Activated T-helper 1 cell treated with anti-CD3 and anti-CD28 coated beads, Interleukin-12 subunit alpha, Interleukin-12 subunit beta, Interleukin-2, Interleukin-4 antibody, amounts not matched to agents 30 ng/mL and 10 ng/mL and 1 ng/mL, durations not matched to agents 14 hours and 24 hours and 36 hours (primary cell): ENCODE measurements at regions of chr5 and their contacts with region 1.

Region 1: GRCh38 chr5:60677844-60678664 is 21.9 kb downstream of the DEPDC1B start:
- DNase-seq: no peak
- H3K4me3 Mint-ChIP-seq: no peak overlapping the region
- H3K27ac Mint-ChIP-seq: no peak overlapping the region
- H3K4me1 Mint-ChIP-seq: peaks cover 12% of the 10 kb centered on the region
- H3K27me3 Mint-ChIP-seq: no peaks in the 10 kb centered on the region

Region 2: GRCh38 chr5:60699530-60700382 is 21.7 kb after region 1 on chr5 and contains the start of gene DEPDC1B:
- intact Hi-C with region 1: loop called (anchors 1 kb)
- DNase-seq: peak; percentile 87
- H3K4me3 Mint-ChIP-seq: peak within 1 kb of the TSS; percentile 96
- H3K27ac Mint-ChIP-seq: peak within 1 kb of the TSS; percentile 93
- H3K4me1 Mint-ChIP-seq: peaks cover 37% of the 10 kb centered on the region
- H3K27me3 Mint-ChIP-seq: peaks cover 18% of the 10 kb centered on the region
- total RNA-seq, gene DEPDC1B: 19.6 and 21.2 TPM in 2 replicates

Region 3: GRCh38 chr5:60856066-60856465 is 178.0 kb after region 1 on chr5:
- intact Hi-C with region 1: no loop called
- DNase-seq: no peak
- H3K4me3 Mint-ChIP-seq: no peak overlapping the region
- H3K27ac Mint-ChIP-seq: no peak overlapping the region
- H3K4me1 Mint-ChIP-seq: no peaks in the 10 kb centered on the region
- H3K27me3 Mint-ChIP-seq: peaks cover 2% of the 10 kb centered on the region

Region 4: GRCh38 chr5:60883229-60883628 is 205.2 kb after region 1 on chr5:
- intact Hi-C with region 1: loop called (anchors 1 kb)
- DNase-seq: no peak
- H3K4me3 Mint-ChIP-seq: no peak overlapping the region
- H3K27ac Mint-ChIP-seq: no peak overlapping the region
- H3K4me1 Mint-ChIP-seq: no peaks in the 10 kb centered on the region
- H3K27me3 Mint-ChIP-seq: no peaks in the 10 kb centered on the region

Region 5: DNA sequence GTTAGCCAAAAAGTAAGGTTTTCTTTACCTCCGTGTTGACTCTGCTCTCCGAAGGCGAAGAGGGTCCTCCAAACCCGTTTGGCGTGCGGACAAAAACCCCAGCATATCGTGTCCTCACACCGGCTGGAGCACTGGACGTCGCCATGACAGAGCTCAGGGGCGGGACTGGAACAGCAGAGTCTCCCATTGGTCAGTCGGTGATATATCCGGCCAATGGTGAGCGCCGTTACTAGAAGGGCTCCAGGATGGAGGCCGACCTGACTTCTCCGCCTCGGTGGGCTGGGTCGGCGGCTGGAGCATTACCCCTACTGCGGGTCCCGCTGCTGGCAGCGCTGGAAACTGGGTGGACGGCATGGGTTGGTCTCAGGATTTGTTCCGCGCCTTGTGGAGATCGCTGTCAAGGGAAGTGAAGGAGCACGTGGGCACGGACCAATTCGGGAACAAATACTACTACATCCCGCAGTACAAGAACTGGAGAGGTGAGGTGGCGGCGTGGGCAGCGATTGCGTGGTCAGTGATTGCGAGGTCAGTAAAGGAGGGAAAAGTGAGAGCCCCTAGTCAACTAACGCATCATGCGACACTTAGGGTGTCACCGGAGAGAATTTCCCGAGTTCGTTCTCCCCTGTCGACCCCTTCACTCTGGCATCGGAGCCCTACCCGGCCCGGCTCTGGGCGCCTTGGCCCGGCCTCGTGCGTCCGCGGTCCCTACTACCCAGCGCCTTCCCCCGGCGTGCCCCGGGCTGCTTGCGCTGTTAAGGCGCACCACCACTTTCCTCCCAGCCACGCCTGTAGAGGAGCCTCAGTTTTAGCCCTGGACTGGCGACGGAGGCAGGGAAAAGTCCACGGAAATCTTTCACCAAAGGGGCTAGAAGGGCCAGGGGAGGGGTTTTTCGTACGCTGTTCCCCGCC is 267.1 kb after region 1 on chr5 and contains the starts of genes ERCC8 and NDUFAF2:
- intact Hi-C with region 1: loop called (anchors 5 kb)
- DNase-seq: peak; percentile 85
- H3K4me3 Mint-ChIP-seq: no peak within 1 kb of the TSS
- H3K27ac Mint-ChIP-seq: no peak within 1 kb of the TSS
- H3K4me1 Mint-ChIP-seq: peaks cover 22% of the 10 kb centered on the region
- H3K27me3 Mint-ChIP-seq: no peaks in the 10 kb centered on the region
- total RNA-seq, gene ERCC8: 9.8 and 10.7 TPM in 2 replicates
- total RNA-seq, gene NDUFAF2: 32.9 and 33.8 TPM in 2 replicates

Region 6: DNA sequence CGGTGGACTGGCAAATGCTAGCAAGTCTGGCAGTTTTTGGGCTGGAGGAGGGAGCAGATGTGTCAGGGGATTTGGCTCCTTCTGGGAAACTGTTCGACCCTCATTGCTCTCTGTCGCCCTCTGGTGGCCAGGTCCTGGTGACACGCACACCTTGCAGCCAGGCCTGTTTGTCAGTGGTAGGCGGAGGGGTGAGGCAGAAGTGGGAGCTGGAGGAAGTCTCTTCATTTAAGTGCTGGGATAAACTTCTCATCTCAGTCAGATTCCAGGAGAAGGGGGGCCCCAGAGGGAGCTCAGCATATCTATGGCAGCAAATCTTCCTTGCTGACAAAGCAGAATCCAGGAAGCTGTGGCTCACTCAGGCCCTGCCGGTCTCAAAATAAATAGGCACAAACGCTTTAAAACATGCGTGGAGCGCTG is 980.5 kb after region 1 on chr5:
- intact Hi-C with region 1: loop called (anchors 5 kb)
- DNase-seq: peak; percentile 51
- H3K4me3 Mint-ChIP-seq: no peak overlapping the region
- H3K27ac Mint-ChIP-seq: no peak overlapping the region
- H3K4me1 Mint-ChIP-seq: no peaks in the 10 kb centered on the region
- H3K27me3 Mint-ChIP-seq: peaks cover 7% of the 10 kb centered on the region